CD4-positive, alpha-beta T cell (primary cell): ENCODE measurements at regions of chr6 and their contacts with region 1.

Region 1: DNA sequence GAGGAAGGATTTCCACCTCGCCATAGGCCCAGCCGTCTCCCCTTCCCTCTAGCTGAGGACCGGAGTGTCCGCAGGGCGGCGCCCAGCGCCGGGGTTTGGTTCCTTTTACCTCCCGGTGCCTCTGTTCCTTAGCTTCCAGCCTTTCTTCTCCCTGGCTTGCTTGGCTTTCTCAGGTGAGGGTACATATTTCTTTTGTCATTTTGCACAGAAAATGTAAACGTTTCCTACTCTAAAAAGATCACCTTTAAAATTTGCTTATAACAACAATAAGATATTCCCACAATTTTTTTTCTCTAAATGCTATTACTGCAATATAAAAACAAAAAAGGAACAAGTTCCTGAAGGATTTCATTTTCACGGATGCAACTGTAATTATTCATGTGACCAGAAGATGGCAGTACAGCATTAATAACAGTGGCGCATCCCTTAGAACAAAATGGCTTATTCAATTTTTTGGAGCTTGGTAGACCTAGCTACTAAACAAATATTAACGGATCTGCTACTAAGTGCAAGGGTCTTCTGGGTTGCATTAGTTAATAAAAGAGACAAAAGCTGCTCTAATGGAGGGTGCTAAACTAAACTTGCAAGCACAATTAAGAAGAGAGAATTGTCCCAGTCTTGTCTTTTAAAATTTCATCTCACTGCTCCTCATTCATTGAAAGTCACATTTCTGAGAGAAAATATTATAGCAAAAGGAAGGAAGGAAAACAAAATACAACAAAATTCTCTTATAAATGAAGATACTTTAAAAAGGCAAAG is 172.9 kb downstream of the ADGRG6 start:
- DNase-seq: peak in 3 of 14 experiments; percentile 34 to 74 (median 64)
- ATAC-seq: peak; percentile 62
- H3K4me3 ChIP-seq: no peak overlapping the region
- H3K4me3 Mint-ChIP-seq: no peak overlapping the region
- H3K27ac ChIP-seq: no peak overlapping the region
- H3K27ac Mint-ChIP-seq: no peak overlapping the region
- H3K4me1 ChIP-seq: no peaks in the 10 kb centered on the region
- H3K4me1 Mint-ChIP-seq: peaks cover 6% of the 10 kb centered on the region
- H3K27me3 ChIP-seq: no peaks in the 10 kb centered on the region
- H3K27me3 Mint-ChIP-seq: no peaks in the 10 kb centered on the region
- CTCF ChIP-seq: peak; percentile 94

Region 2: GRCh38 chr6:142218446-142218845 is 256.3 kb before region 1 on chr6:
- CTCF ChIA-PET with region 1: no interaction called
- POLR2A ChIA-PET with region 1: no interaction called
- intact Hi-C with region 1: no loop called
- DNase-seq: no peak
- ATAC-seq: no peak
- H3K4me3 ChIP-seq: no peak overlapping the region
- H3K4me3 Mint-ChIP-seq: no peak overlapping the region
- H3K27ac ChIP-seq: no peak overlapping the region
- H3K27ac Mint-ChIP-seq: no peak overlapping the region
- H3K4me1 ChIP-seq: no peaks in the 10 kb centered on the region
- H3K4me1 Mint-ChIP-seq: no peaks in the 10 kb centered on the region
- H3K27me3 ChIP-seq: no peaks in the 10 kb centered on the region
- H3K27me3 Mint-ChIP-seq: no peaks in the 10 kb centered on the region
- CTCF ChIP-seq: no peak

Region 3: GRCh38 chr6:142952614-142953013 is 477.9 kb after region 1 on chr6:
- CTCF ChIA-PET with region 1: no interaction called
- POLR2A ChIA-PET with region 1: interaction called, 3 read pairs
- intact Hi-C with region 1: loop called in 1 of 2 experiments (anchors 5 kb)
- DNase-seq: peak in 1 of 14 experiments; percentile 46
- ATAC-seq: no peak
- H3K4me3 ChIP-seq: no peak overlapping the region
- H3K4me3 Mint-ChIP-seq: no peak overlapping the region
- H3K27ac ChIP-seq: no peak overlapping the region
- H3K27ac Mint-ChIP-seq: peak overlapping the region; percentile 98
- H3K4me1 ChIP-seq: no peaks in the 10 kb centered on the region
- H3K4me1 Mint-ChIP-seq: peaks cover 30% of the 10 kb centered on the region
- H3K27me3 ChIP-seq: no peaks in the 10 kb centered on the region
- H3K27me3 Mint-ChIP-seq: no peaks in the 10 kb centered on the region
- CTCF ChIP-seq: no peak

Region 4: GRCh38 chr6:143026696-143027449 is 552.2 kb after region 1 on chr6:
- CTCF ChIA-PET with region 1: interaction called, 4 read pairs
- POLR2A ChIA-PET with region 1: no interaction called
- intact Hi-C with region 1: loop called (anchors 2 kb)
- DNase-seq: peak; percentile 18 to 72 (median 40)
- ATAC-seq: peak; percentile 60
- H3K4me3 ChIP-seq: no peak overlapping the region
- H3K4me3 Mint-ChIP-seq: no peak overlapping the region
- H3K27ac ChIP-seq: no peak overlapping the region
- H3K27ac Mint-ChIP-seq: no peak overlapping the region
- H3K4me1 ChIP-seq: no peaks in the 10 kb centered on the region
- H3K4me1 Mint-ChIP-seq: no peaks in the 10 kb centered on the region
- H3K27me3 ChIP-seq: no peaks in the 10 kb centered on the region
- H3K27me3 Mint-ChIP-seq: no peaks in the 10 kb centered on the region
- CTCF ChIP-seq: peak; percentile 62

Region 5: GRCh38 chr6:143286251-143286795 is 811.6 kb after region 1 on chr6:
- CTCF ChIA-PET with region 1: no interaction called
- POLR2A ChIA-PET with region 1: no interaction called
- intact Hi-C with region 1: loop called in 1 of 2 experiments (anchors 10 kb)
- DNase-seq: no peak
- ATAC-seq: no peak
- H3K4me3 ChIP-seq: no peak overlapping the region
- H3K4me3 Mint-ChIP-seq: no peak overlapping the region
- H3K27ac ChIP-seq: no peak overlapping the region
- H3K27ac Mint-ChIP-seq: no peak overlapping the region
- H3K4me1 ChIP-seq: no peaks in the 10 kb centered on the region
- H3K4me1 Mint-ChIP-seq: no peaks in the 10 kb centered on the region
- H3K27me3 ChIP-seq: no peaks in the 10 kb centered on the region
- H3K27me3 Mint-ChIP-seq: no peaks in the 10 kb centered on the region
- CTCF ChIP-seq: no peak

Region 6: GRCh38 chr6:144013486-144013909 is 1538.8 kb after region 1 on chr6:
- CTCF ChIA-PET with region 1: interaction called, 6 read pairs
- POLR2A ChIA-PET with region 1: no interaction called
- intact Hi-C with region 1: loop called (anchors 1 to 2 kb)
- DNase-seq: peak; percentile 43 to 80 (median 55)
- ATAC-seq: peak; percentile 52
- H3K4me3 ChIP-seq: no peak overlapping the region
- H3K4me3 Mint-ChIP-seq: no peak overlapping the region
- H3K27ac ChIP-seq: no peak overlapping the region
- H3K27ac Mint-ChIP-seq: no peak overlapping the region
- H3K4me1 ChIP-seq: peaks cover 1% of the 10 kb centered on the region
- H3K4me1 Mint-ChIP-seq: no peaks in the 10 kb centered on the region
- H3K27me3 ChIP-seq: peaks cover 0 to 2% of the 10 kb centered on the region in 2 experiments
- H3K27me3 Mint-ChIP-seq: peaks cover 27% of the 10 kb centered on the region
- CTCF ChIP-seq: peak; percentile 98